PC-9 (cell line): ENCODE measurements at regions of chr6 and their contacts with region 1.

Region 1: DNA sequence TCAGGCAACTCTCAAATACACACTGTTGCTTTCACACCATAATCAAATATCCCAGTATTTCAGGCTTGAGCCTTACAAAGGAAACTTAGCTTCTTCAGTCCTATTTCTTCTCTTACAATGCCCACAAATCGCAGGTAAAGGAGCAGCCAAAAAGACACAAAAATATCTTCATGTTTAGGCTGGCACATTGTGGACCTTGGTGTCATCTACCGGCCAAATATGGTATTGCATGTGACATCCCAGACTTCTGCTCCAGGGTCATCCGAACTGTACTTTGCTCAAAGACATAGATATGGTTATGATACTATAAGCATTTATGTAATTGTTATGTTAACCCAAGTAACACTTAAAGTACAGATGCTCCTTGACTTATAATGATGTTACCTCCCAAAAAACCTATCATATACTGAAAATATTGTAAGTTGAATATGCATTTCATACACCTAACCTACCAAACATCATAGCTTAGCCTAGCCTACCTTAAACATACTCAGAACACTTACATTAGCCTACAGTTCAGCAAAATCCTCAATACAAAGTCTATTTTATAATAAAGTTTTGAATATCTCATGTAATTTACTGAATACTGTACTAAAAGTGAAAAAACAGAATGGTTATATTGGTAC is 4.6 kb downstream of the OR2H2 start:
- DNase-seq: peak in 1 of 2 experiments; percentile 45
- H3K4me3 ChIP-seq: no peak overlapping the region
- H3K27ac ChIP-seq: no peak overlapping the region
- H3K4me1 ChIP-seq: no peaks in the 10 kb centered on the region
- H3K27me3 ChIP-seq: peaks cover 51% of the 10 kb centered on the region
- CTCF ChIP-seq: peak; percentile 97

Region 2: DNA sequence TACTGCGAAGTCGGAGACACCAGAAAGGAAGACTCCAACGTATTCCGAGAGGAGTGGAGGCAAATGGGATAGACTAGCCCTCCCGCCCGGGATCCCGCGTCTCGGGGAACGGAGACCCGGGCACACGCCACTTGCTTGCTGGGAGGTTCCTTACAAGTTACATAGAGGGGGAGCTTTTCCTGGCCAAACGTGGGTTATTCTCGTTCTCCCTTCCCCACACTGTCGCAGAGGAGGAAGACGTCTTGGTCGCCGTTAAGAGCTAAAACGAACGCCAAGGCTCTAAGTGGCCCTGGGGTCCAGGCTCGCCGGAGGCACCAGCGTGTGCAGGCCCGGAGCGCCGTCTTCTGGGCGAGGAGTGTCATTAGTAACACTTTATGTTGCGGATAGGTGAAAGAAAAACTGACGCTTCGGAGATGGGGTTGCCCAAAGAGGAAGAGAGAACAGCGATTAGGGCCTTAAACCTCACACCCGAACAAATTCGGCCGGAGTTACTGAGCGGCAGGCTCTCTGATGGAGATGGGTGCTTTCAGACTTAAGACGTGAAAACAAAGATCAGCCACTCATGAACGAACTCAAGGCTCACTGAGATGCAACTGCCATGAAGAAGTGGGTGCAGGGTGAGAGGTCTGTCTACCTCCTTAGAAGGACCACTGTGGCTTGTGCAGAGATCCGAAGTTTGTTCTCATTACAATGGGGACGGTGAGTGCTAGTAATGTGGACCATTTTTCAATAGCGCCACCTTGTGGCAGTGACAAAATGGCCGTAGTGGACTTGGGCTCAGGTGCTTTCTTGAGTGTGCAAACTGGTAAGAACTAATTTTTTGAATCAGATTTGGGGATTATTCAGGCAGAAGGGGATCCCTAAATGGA is 572.7 kb before region 1 on chr6:
- CTCF ChIA-PET with region 1: no interaction called
- POLR2A ChIA-PET with region 1: no interaction called
- intact Hi-C with region 1: loop called (anchors 2 kb)
- DNase-seq: peak; percentile 62 to 77
- H3K4me3 ChIP-seq: peak overlapping the region; percentile 73
- H3K27ac ChIP-seq: no peak overlapping the region
- H3K4me1 ChIP-seq: no peaks in the 10 kb centered on the region
- H3K27me3 ChIP-seq: no peaks in the 10 kb centered on the region
- CTCF ChIP-seq: peak; percentile 94

Region 3: DNA sequence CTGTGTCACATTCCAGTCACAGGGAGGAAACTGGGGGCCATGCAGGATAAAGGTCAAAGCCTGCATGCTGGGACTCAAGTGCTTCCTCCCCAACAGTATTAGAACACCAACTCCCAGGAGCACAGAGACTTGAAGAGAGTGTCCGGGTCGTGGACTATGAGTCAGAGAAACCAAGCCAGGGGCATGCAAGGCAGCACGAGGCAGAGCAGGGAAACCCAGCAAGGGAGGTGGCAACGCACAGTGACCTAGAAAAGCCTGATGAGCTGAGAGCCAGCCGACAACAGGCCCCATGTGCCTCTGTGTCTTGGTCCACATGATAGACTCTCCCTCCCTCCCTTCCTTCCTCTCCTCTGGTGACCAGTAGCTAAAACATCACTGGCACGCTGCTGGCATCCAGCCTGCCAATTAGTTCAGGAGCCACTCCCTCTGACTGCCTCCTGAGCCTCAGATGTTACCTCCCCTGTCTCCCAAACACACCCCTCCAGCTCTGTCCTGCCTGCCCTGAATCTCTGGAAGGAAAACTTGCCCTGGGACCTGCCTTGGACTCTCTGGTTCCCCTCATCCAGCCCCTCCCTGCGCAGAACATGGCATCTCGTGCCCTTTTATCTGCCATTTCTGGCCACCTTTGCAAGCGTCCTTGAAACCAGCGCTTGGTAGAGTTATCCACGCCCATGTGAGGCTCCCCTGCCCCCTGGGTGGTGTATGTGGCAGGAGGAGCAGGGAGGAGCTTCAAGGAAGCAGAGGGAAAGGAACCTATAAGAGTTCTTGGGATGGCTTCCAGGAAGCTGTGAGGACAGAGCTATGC is 502.2 kb after region 1 on chr6:
- CTCF ChIA-PET with region 1: no interaction called
- POLR2A ChIA-PET with region 1: no interaction called
- intact Hi-C with region 1: no loop called
- DNase-seq: peak; percentile 88 to 94
- H3K4me3 ChIP-seq: no peak overlapping the region
- H3K27ac ChIP-seq: peak overlapping the region; percentile 65
- H3K4me1 ChIP-seq: peaks cover 46% of the 10 kb centered on the region
- H3K27me3 ChIP-seq: no peaks in the 10 kb centered on the region
- CTCF ChIP-seq: no peak